Activated T-helper 2 cell treated with anti-CD3 and anti-CD28 coated beads, Interferon-gamma antibody, Interleukin-2, Interleukin-4, amounts not matched to agents 10 μg/mL and 5 μg/mL and 100 μg/mL, durations not matched to agents 14 hours and 24 hours and 36 hours (primary cell): ENCODE measurements at regions of chr18 and their contacts with region 1.

Region 1: GRCh38 chr18:23155537-23155936 is 20.3 kb downstream of the CABLES1 start:
- DNase-seq: no peak
- H3K4me3 Mint-ChIP-seq: no peak overlapping the region
- H3K27ac Mint-ChIP-seq: no peak overlapping the region
- H3K4me1 Mint-ChIP-seq: peaks cover 4% of the 10 kb centered on the region
- H3K27me3 Mint-ChIP-seq: no peaks in the 10 kb centered on the region

Region 2: GRCh38 chr18:23200746-23201145 is 45.2 kb after region 1 on chr18:
- intact Hi-C with region 1: loop called (anchors 5 kb)
- DNase-seq: no peak
- H3K4me3 Mint-ChIP-seq: no peak overlapping the region
- H3K27ac Mint-ChIP-seq: no peak overlapping the region
- H3K4me1 Mint-ChIP-seq: peaks cover 11% of the 10 kb centered on the region
- H3K27me3 Mint-ChIP-seq: no peaks in the 10 kb centered on the region